A673 (cell line): ENCODE measurements at regions of chr1 and their contacts with region 1.

Region 1: DNA sequence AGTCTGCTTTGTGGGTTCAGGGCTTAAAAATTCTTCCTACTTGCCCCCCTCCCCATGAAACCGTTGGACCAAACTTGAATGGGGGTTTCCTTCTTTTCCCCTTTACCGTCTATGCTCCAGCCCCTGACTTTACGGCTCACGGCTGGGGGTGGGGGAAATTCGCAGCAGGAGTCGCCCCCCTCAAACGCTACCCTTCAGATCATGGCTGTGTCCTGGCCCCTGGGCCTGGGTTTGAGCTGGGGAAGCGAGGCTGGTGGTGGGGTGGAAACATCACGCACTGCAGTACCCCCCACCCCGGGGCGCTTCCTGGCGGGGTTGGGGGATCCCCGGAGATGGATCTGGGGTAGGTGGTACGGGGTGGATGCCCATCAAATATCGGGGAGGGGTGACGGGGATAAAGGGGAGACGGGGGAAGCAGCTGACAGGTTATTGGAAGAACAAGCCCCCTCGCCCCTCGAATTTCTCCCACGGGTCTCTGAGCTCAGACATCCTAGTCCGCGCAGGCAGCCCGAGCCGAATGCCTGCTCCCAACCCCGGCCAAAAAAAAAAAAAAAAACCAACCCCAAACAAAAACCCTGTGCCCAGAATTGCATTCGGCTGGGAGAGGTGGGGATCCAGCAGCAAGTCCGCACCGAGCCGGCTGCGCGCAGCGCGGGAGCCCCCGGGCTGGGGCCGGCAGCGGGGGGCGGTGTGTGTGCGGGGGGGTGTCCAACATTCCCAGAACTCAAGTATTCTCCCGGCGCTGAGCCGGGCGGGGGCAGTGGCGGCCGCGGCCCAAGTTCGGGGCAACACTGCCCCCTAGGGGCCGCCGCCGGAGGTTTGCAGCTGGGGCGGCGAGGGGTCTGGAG is 59.0 kb upstream of the ACOT11 start:
- DNase-seq: peak; percentile 88
- H3K4me3 ChIP-seq: peak overlapping the region; percentile 65
- H3K27ac ChIP-seq: peak overlapping the region; percentile 83
- H3K4me1 ChIP-seq: peaks cover 41% of the 10 kb centered on the region
- H3K27me3 ChIP-seq: no peaks in the 10 kb centered on the region
- CTCF ChIP-seq: peak; percentile 95

Region 2: DNA sequence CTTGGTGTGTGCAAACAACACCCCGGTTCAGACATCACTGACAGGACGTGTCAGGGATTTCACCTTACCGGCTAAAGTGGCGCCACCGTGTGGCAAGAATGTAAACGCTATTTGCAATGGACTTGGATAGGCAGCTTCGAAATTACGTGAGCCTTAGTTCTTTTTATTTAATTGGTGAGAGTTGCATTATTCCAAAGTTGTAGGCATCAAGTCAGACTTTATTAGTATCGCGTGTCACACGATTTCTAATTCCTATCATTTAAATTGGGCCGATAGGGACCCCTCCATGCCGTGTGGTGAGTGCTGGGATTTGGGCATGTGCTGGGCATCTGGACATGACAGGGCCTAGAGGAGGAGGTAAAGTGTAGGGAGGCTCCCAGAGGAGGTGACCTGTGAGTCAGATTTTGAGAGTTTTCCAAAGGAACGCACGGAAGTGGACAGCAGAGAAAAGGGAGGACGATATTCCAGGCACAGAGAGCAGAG is 1306.9 kb before region 1 on chr1:
- CTCF ChIA-PET with region 1: interaction called, 14 read pairs
- POLR2A ChIA-PET with region 1: no interaction called
- intact Hi-C with region 1: no loop called
- DNase-seq: peak; percentile 84
- H3K4me3 ChIP-seq: no peak overlapping the region
- H3K27ac ChIP-seq: no peak overlapping the region
- H3K4me1 ChIP-seq: no peaks in the 10 kb centered on the region
- H3K27me3 ChIP-seq: no peaks in the 10 kb centered on the region
- CTCF ChIP-seq: peak; percentile 98

Region 3: DNA sequence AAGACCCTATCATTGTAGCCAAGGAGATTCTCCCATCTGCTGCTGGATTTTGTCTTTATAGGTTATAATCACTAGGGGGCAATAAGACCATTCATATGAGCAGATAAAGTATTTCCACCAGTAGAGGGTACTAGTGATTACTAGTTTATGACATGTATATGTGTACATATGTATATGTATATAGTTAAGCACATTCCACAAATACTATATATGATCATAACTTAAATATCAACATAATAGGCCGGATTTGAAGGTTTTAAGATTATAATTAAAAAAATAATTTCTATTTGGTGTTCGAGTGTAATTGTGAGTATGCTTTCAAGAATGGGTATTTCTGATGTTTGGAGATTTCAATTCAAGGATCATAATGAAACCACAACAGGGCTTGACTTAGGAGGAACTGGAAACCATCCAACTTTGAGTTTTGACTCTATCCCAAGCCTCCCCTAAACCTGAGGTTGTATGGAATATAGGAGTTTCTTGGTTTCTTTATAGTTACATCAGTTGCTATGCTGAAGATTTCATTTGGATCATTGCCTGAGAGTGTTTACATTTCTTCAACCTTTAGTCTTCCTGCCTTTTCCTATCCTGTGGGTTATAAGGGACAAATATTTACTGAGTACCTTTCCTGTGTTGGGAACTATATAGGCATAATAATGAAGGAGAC is 418.7 kb before region 1 on chr1:
- CTCF ChIA-PET with region 1: no interaction called
- POLR2A ChIA-PET with region 1: no interaction called
- intact Hi-C with region 1: loop called (anchors 5 kb)
- DNase-seq: peak; percentile 54
- H3K4me3 ChIP-seq: no peak overlapping the region
- H3K27ac ChIP-seq: no peak overlapping the region
- H3K4me1 ChIP-seq: no peaks in the 10 kb centered on the region
- H3K27me3 ChIP-seq: no peaks in the 10 kb centered on the region
- CTCF ChIP-seq: peak; percentile 75

Region 4: GRCh38 chr1:54180701-54181360 is 308.2 kb before region 1 on chr1:
- CTCF ChIA-PET with region 1: interaction called, 12 read pairs
- POLR2A ChIA-PET with region 1: no interaction called
- intact Hi-C with region 1: no loop called
- DNase-seq: no peak
- H3K4me3 ChIP-seq: no peak overlapping the region
- H3K27ac ChIP-seq: no peak overlapping the region
- H3K4me1 ChIP-seq: no peaks in the 10 kb centered on the region
- H3K27me3 ChIP-seq: no peaks in the 10 kb centered on the region
- CTCF ChIP-seq: no peak

Region 5: GRCh38 chr1:54406339-54407153 is 82.5 kb before region 1 on chr1 and contains the start of gene SSBP3:
- CTCF ChIA-PET with region 1: interaction called, 5 read pairs
- POLR2A ChIA-PET with region 1: no interaction called
- intact Hi-C with region 1: loop called (anchors 1 kb)
- DNase-seq: peak; percentile 92
- H3K4me3 ChIP-seq: peak within 1 kb of the TSS; percentile 63
- H3K27ac ChIP-seq: peak within 1 kb of the TSS; percentile 67
- H3K4me1 ChIP-seq: peaks cover 6% of the 10 kb centered on the region
- H3K27me3 ChIP-seq: no peaks in the 10 kb centered on the region
- CTCF ChIP-seq: no peak
- total RNA-seq, gene SSBP3: 43.0 and 55.1 TPM in 2 replicates

Region 6: DNA sequence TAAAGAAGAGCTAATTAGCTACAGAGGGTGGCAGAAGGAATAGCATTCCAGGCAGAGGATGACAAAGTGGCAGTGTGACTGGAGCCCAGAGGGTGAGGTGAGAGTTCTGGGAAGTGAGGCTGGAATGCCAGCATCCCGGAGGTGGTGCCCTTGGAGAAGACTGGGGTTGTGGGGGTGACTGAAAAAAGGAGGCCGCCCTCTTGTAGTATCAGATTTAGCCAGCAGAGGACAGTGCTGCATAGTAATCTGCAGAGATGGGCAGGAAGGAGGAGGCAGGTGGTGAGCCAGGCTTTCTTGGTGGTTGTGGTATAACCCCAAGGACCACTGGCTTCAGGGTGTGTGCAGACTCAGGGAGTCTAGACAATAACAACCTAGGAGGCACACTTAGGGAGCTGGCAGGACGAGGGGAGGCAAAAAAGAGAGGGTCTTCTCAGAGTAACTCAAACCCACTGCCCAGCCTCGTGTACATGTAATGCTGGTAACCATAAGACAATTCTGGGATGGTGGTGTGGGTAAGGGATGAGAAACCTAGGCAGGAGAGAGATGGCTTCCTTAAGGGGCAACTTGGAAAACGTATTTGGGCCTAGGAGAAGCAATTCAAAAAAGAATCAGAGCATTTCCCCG is 183.1 kb after region 1 on chr1:
- CTCF ChIA-PET with region 1: interaction called, 12 read pairs
- POLR2A ChIA-PET with region 1: no interaction called
- intact Hi-C with region 1: no loop called
- DNase-seq: peak; percentile 65
- H3K4me3 ChIP-seq: no peak overlapping the region
- H3K27ac ChIP-seq: no peak overlapping the region
- H3K4me1 ChIP-seq: no peaks in the 10 kb centered on the region
- H3K27me3 ChIP-seq: no peaks in the 10 kb centered on the region
- CTCF ChIP-seq: peak; percentile 80